Activated T-helper 2 cell treated with anti-CD3 and anti-CD28 coated beads, Interferon-gamma antibody, Interleukin-2, Interleukin-4, amounts not matched to agents 10 μg/mL and 5 μg/mL and 100 μg/mL, durations not matched to agents 14 hours and 24 hours and 36 hours (primary cell): ENCODE measurements at regions of chr1 and their contacts with region 1.

Region 1: GRCh38 chr1:206544562-206545257 is 37.4 kb downstream of the RASSF5 start:
- DNase-seq: peak; percentile 73
- H3K4me3 Mint-ChIP-seq: no peak overlapping the region
- H3K27ac Mint-ChIP-seq: no peak overlapping the region
- H3K4me1 Mint-ChIP-seq: peaks cover 18% of the 10 kb centered on the region
- H3K27me3 Mint-ChIP-seq: no peaks in the 10 kb centered on the region

Region 2: DNA sequence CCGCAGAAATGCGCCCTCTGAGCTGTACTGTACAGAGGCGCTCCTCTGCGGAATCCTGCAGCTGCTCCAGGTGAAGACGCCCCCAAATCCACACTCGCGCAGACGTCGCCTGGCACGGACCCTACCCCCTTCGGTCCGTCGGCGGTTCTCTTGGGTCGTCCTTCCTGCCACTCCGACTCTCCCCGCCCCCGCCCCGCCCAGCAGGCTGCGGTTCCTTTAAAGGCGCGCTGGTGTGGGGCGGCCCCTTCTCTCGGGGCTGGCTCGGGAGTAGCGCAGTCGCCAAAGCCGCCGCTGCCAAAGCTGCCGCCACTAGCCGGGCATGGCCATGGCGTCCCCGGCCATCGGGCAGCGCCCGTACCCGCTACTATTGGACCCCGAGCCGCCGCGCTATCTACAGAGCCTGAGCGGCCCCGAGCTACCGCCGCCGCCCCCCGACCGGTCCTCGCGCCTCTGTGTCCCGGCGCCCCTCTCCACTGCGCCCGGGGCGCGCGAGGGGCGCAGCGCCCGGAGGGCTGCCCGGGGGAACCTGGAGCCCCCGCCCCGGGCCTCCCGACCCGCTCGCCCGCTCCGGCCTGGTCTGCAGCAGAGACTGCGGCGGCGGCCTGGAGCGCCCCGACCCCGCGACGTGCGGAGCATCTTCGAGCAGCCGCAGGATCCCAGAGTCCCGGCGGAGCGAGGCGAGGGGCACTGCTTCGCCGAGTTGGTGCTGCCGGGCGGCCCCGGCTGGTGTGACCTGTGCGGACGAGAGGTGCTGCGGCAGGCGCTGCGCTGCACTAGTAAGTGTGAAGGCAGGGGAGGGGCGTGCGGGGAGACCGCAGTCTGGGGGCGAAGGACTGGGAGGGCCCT is 37.2 kb before region 1 on chr1 and contains the start of gene RASSF5:
- intact Hi-C with region 1: no loop called
- DNase-seq: peak; percentile 74
- H3K4me3 Mint-ChIP-seq: peak within 1 kb of the TSS; percentile 75
- H3K27ac Mint-ChIP-seq: no peak within 1 kb of the TSS
- H3K4me1 Mint-ChIP-seq: peaks cover 30% of the 10 kb centered on the region
- H3K27me3 Mint-ChIP-seq: peaks cover 18% of the 10 kb centered on the region
- total RNA-seq, gene RASSF5: 180 and 182 TPM in 2 replicates

Region 3: GRCh38 chr1:206563367-206564207 is 18.9 kb after region 1 on chr1:
- intact Hi-C with region 1: loop called (anchors 2 kb)
- DNase-seq: no peak
- H3K4me3 Mint-ChIP-seq: peak overlapping the region; percentile 67
- H3K27ac Mint-ChIP-seq: peak overlapping the region; percentile 91
- H3K4me1 Mint-ChIP-seq: peaks cover 89% of the 10 kb centered on the region
- H3K27me3 Mint-ChIP-seq: no peaks in the 10 kb centered on the region

Region 4: DNA sequence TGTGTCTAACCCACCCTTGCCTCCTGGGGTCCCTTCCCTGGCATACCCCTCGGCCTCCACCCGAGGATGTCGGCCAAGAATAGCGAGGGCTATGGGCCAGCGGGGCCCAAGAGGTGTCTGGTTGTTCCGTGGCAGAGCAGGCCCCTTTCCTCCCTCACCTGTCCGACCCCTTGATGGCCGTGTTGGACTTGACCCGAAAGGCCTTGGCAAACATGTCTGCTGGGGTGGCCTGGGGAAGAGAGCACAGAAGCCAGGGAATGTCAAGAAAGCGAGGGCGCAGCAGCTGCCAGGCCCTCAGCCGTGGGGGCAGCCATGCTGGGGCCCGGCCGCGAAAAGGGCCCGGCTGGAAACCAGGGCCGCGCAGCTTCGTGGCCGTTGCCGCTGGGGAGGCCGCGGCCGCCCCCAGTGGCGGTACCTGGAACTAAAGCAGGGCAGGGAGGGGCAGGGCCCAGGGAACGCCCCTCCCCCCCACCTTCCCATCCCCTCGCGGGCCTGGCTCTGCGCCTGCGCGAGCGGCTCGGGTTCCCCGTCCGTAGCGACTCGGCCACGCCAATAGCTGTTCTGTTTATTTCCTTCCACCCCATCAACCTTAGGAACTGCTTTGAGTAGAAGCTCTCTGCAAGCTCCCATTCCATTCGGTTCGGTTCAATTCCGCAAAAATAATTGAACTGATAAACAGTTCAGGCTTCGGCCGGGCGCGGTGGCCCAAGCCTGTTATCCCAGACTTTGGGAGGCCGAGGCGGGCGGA is 67.6 kb after region 1 on chr1 and contains the start of gene EIF2D:
- intact Hi-C with region 1: no loop called
- DNase-seq: peak; percentile 91
- H3K4me3 Mint-ChIP-seq: peak within 1 kb of the TSS; percentile 92
- H3K27ac Mint-ChIP-seq: peak within 1 kb of the TSS; percentile 84
- H3K4me1 Mint-ChIP-seq: peaks cover 30% of the 10 kb centered on the region
- H3K27me3 Mint-ChIP-seq: peaks cover 7% of the 10 kb centered on the region
- total RNA-seq, gene EIF2D: 72.7 and 73.3 TPM in 2 replicates

Region 5: GRCh38 chr1:206952171-206952570 is 407.5 kb after region 1 on chr1:
- intact Hi-C with region 1: no loop called
- DNase-seq: no peak
- H3K4me3 Mint-ChIP-seq: no peak overlapping the region
- H3K27ac Mint-ChIP-seq: no peak overlapping the region
- H3K4me1 Mint-ChIP-seq: peaks cover 12% of the 10 kb centered on the region
- H3K27me3 Mint-ChIP-seq: peaks cover 9% of the 10 kb centered on the region